Naive thymus-derived CD4-positive, alpha-beta T cell (primary cell): ENCODE measurements at regions of chr13 and their contacts with region 1.

Region 1: GRCh38 chr13:33188093-33188882 is 97.3 kb downstream of the STARD13 start:
- DNase-seq: no peak
- ATAC-seq: no peak
- H3K4me3 ChIP-seq: no peak overlapping the region
- H3K4me3 Mint-ChIP-seq: peak overlapping the region in 1 of 10 donors; percentile 18
- H3K27ac ChIP-seq: no peak overlapping the region
- H3K27ac Mint-ChIP-seq: peak overlapping the region in 1 of 9 donors; percentile 61
- H3K4me1 ChIP-seq: no peaks in the 10 kb centered on the region
- H3K4me1 Mint-ChIP-seq: peaks cover 3 to 37% (median 8%) of the 10 kb centered on the region in 7 donors
- H3K27me3 ChIP-seq: no peaks in the 10 kb centered on the region
- H3K27me3 Mint-ChIP-seq: peaks cover 0 to 18% (median 11%) of the 10 kb centered on the region in 5 donors

Region 2: GRCh38 chr13:32669030-32669646 is 519.1 kb before region 1 on chr13:
- CTCF ChIA-PET with region 1: no interaction called
- POLR2A ChIA-PET with region 1: no interaction called
- intact Hi-C with region 1: no loop called
- DNase-seq: peak in 7 of 9 donors; percentile 11 to 57 (median 37)
- ATAC-seq: peak; percentile 72
- H3K4me3 ChIP-seq: no peak overlapping the region
- H3K4me3 Mint-ChIP-seq: no peak overlapping the region
- H3K27ac ChIP-seq: no peak overlapping the region
- H3K27ac Mint-ChIP-seq: peak overlapping the region in 2 of 9 donors; percentile 2 to 14
- H3K4me1 ChIP-seq: no peaks in the 10 kb centered on the region
- H3K4me1 Mint-ChIP-seq: peaks cover 2 to 31% (median 11%) of the 10 kb centered on the region in 7 donors
- H3K27me3 ChIP-seq: no peaks in the 10 kb centered on the region
- H3K27me3 Mint-ChIP-seq: no peaks in the 10 kb centered on the region

Region 3: DNA sequence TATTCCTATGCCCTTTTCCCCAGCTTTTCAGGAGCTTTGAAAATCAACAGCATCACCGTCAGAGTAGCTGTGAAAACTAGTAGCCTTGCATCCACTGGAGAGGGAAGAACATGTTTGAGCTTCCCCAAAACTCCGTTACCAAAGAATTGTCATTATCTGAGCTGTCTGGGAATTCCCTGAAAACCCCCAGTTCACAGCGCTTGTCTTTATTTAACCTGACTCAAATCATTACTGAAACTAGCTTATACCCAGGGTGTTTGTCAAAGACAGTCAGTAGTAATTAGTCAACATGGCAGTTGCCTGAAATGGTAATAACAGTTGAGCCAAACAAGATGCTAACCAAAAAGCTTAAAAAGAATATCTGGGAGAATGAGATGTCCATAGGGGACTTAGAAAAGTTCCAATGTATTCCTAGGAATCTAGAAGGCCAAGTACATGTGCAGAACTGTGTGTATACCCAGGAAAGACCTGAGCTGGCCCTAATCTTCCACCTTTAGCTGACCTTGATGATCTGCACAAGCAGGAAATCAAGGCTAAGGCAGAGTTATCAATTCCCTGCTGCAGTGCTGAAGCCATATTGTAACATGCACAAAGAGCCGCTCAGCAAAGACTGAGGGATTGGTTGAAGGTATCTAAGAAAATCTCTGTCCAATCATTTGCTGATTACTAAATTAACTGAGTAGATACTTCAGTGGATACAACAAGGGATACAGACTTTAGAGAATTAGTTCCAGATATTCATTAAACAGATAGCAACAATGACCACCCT is 41.3 kb before region 1 on chr13:
- CTCF ChIA-PET with region 1: no interaction called
- POLR2A ChIA-PET with region 1: no interaction called
- intact Hi-C with region 1: loop called in 1 of 2 experiments (anchors 1 kb)
- DNase-seq: no peak
- ATAC-seq: no peak
- H3K4me3 ChIP-seq: no peak overlapping the region
- H3K4me3 Mint-ChIP-seq: peak overlapping the region in 1 of 10 donors; percentile 41
- H3K27ac ChIP-seq: no peak overlapping the region
- H3K27ac Mint-ChIP-seq: peak overlapping the region in 1 of 9 donors; percentile 74
- H3K4me1 ChIP-seq: no peaks in the 10 kb centered on the region
- H3K4me1 Mint-ChIP-seq: peaks cover 0 to 17% (median 0%) of the 10 kb centered on the region in 7 donors
- H3K27me3 ChIP-seq: no peaks in the 10 kb centered on the region
- H3K27me3 Mint-ChIP-seq: peaks cover 0 to 53% (median 17%) of the 10 kb centered on the region in 5 donors

Region 4: GRCh38 chr13:34502011-34502410 is 1313.7 kb after region 1 on chr13:
- CTCF ChIA-PET with region 1: no interaction called
- POLR2A ChIA-PET with region 1: no interaction called
- intact Hi-C with region 1: no loop called
- DNase-seq: no peak
- ATAC-seq: no peak
- H3K4me3 ChIP-seq: no peak overlapping the region
- H3K4me3 Mint-ChIP-seq: no peak overlapping the region
- H3K27ac ChIP-seq: no peak overlapping the region
- H3K27ac Mint-ChIP-seq: no peak overlapping the region
- H3K4me1 ChIP-seq: no peaks in the 10 kb centered on the region
- H3K4me1 Mint-ChIP-seq: no peaks in the 10 kb centered on the region
- H3K27me3 ChIP-seq: no peaks in the 10 kb centered on the region
- H3K27me3 Mint-ChIP-seq: no peaks in the 10 kb centered on the region